Activated T-helper 1 cell treated with anti-CD3 and anti-CD28 coated beads, Interleukin-12 subunit alpha, Interleukin-12 subunit beta, Interleukin-2, Interleukin-4 antibody, amounts not matched to agents 30 ng/mL and 10 ng/mL and 1 ng/mL, durations not matched to agents 14 hours and 24 hours and 36 hours (primary cell): ENCODE measurements at regions of chr14 and their contacts with region 1.

Region 1: DNA sequence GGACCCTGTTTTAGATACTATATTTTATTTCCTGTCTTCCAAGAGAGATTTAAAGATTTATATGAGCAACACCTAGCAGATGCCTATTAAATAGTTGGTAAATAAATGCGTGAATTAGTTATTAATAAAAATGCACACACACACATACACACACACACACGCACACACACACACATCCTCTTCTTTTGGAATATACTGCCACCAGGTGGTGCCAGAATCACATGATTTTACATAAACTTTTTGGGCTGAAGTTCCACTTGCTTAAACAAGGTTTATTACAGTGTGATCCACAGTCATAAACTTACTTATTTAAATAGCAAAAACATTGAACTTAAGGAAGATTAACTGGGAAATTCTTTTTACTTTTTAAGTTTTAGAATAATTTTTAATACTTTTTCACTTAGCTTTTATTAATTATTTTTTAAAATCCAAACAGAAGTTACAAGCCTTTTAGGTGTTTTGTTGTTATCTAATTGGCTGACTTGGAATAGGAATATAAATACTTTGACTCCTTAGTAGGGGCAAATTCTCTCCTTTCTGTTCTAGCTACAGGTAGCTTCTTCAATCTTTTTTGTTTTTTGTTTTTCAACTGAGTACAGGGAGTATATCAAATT is 17.5 kb downstream of the RAD51B start:
- DNase-seq: no peak
- H3K4me3 Mint-ChIP-seq: no peak overlapping the region
- H3K27ac Mint-ChIP-seq: no peak overlapping the region
- H3K4me1 Mint-ChIP-seq: no peaks in the 10 kb centered on the region
- H3K27me3 Mint-ChIP-seq: no peaks in the 10 kb centered on the region

Region 2: GRCh38 chr14:67738740-67739504 is 98.2 kb before region 1 on chr14:
- intact Hi-C with region 1: no loop called
- DNase-seq: no peak
- H3K4me3 Mint-ChIP-seq: no peak overlapping the region
- H3K27ac Mint-ChIP-seq: no peak overlapping the region
- H3K4me1 Mint-ChIP-seq: no peaks in the 10 kb centered on the region
- H3K27me3 Mint-ChIP-seq: peaks cover 6% of the 10 kb centered on the region

Region 3: GRCh38 chr14:68816262-68816942 is 979.3 kb after region 1 on chr14:
- intact Hi-C with region 1: loop called (anchors 2 kb)
- DNase-seq: peak; percentile 84
- H3K4me3 Mint-ChIP-seq: peak overlapping the region; percentile 76
- H3K27ac Mint-ChIP-seq: peak overlapping the region; percentile 90
- H3K4me1 Mint-ChIP-seq: peaks cover 58% of the 10 kb centered on the region
- H3K27me3 Mint-ChIP-seq: no peaks in the 10 kb centered on the region